ENCODE measurements at regions of chr3 and their contacts with region 1.

Region 1: DNA sequence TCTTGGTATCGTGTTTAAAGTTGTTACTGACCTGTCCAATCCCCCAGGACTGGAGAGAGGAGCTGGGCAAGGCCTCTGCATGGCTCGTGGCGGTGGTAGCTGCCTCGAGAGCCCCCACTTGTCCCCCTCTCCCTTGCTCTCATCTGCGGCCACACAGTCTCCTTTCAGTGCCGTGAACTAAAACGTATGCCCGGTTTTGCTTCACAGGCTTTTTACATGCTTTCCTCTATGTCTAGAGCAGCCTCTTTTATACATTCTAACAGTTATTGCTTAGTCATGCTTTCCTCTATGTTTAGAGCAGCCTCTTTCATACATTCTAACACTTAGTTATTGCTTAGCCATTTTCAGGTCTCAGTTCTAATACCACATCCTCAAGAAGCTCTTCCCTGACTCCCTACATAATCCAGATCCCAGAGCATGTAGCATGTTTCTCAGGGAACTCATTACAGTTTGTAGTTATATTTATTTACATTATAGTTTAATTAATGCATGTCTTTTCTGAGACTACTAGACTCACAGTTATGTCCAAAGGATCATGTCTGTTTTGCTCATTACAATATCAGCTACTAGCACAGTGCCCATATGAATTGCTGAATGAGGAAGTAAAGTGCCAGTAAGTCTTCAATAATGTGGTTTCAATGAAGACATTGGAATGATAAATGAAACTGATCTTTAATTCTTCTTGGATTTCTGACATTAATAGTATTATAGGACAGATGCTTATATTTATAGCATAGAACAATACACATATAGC is 66.5 kb upstream of the TBL1XR1 start:
- DNase-seq: no peak
- ATAC-seq: no peak
- H3K4me3 ChIP-seq: no peak overlapping the region
- H3K27ac ChIP-seq: no peak overlapping the region
- H3K4me1 ChIP-seq: no peaks in the 10 kb centered on the region
- H3K27me3 ChIP-seq: no peaks in the 10 kb centered on the region
- CTCF ChIP-seq: no peak

Region 2: DNA sequence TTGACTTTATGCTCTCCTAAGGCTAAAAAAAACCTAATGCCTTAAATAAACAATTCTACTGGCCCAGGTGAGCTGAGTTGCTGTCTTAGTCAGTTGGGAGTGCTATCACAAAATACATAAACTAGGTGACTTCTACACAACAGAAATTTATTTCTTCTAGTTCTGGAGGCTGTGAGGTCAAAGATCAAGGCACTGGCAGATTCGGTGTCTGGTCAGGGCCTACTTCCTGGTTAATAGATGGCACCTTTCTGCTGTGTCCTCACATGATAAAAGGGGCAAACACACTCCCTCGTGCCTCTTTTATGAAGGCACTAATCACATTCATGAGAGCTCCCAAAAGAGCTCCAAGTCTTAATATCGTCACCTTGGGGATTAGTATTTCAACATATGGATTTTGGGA is 55.0 kb before region 1 on chr3:
- CTCF ChIA-PET with region 1: no interaction called
- POLR2A ChIA-PET with region 1: interaction called, 15 read pairs
- intact Hi-C with region 1: no loop called
- DNase-seq: no peak
- ATAC-seq: no peak
- H3K4me3 ChIP-seq: no peak overlapping the region
- H3K27ac ChIP-seq: no peak overlapping the region
- H3K4me1 ChIP-seq: no peaks in the 10 kb centered on the region
- H3K27me3 ChIP-seq: no peaks in the 10 kb centered on the region
- CTCF ChIP-seq: no peak

Region 3: DNA sequence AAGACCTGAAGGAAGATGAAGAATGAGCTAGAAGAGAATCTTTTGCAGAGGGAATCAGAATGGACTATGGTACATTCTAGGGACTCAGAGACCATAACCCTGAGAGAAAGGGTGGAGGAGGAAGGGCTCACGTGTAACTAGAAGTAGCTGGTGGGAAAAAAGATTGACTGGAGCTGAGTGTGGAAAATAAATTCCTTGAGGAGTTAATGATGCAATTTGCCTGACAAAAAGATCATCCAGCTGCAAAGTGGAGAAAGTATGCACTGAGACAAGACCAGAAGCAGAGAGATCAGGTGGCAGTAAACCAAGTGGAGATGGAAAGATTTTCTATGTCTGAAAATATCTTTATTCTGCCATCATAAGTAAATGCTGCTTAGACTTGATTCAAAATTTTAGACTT is 13.6 kb before region 1 on chr3:
- CTCF ChIA-PET with region 1: no interaction called
- POLR2A ChIA-PET with region 1: interaction called, 11 read pairs
- intact Hi-C with region 1: no loop called
- DNase-seq: no peak
- ATAC-seq: no peak
- H3K4me3 ChIP-seq: no peak overlapping the region
- H3K27ac ChIP-seq: no peak overlapping the region
- H3K4me1 ChIP-seq: peaks cover 6% of the 10 kb centered on the region
- H3K27me3 ChIP-seq: no peaks in the 10 kb centered on the region
- CTCF ChIP-seq: no peak